ENCODE measurements at regions of chr1 and their contacts with region 1.

Region 1: GRCh38 chr1:103514920-103515503 is 10.5 kb upstream of the RNPC3 start:
- DNase-seq: peak in 7 of 9 donors; percentile 18 to 57 (median 50)
- ATAC-seq: peak; percentile 89
- H3K4me3 ChIP-seq: no peak overlapping the region
- H3K4me3 Mint-ChIP-seq: no peak overlapping the region
- H3K27ac ChIP-seq: no peak overlapping the region
- H3K27ac Mint-ChIP-seq: peak overlapping the region in 2 of 9 donors; percentile 27 to 32
- H3K4me1 ChIP-seq: no peaks in the 10 kb centered on the region
- H3K4me1 Mint-ChIP-seq: peaks cover 0 to 6% (median 4%) of the 10 kb centered on the region in 7 donors
- H3K27me3 ChIP-seq: no peaks in the 10 kb centered on the region
- H3K27me3 Mint-ChIP-seq: no peaks in the 10 kb centered on the region

Region 2: DNA sequence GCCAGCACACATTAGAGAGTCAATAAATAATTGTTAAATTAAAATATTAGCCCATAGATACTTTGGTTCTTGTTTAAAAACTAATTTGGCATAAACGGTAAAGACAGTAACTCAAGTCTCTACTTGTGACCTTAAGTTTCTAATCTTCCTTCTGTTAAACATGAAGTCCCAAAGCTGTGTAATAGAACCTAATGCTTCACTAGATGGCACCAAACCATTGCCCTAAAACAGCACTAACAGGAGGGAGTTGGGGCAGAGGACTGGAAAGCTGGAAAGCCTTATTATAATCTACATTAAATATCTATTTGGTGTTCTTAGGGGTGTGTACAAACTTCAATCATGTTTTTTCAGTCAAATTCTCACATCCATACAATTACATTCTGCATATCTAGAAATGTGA is 1694.9 kb before region 1 on chr1:
- CTCF ChIA-PET with region 1: no interaction called
- POLR2A ChIA-PET with region 1: no interaction called
- intact Hi-C with region 1: loop called in 1 of 2 experiments (anchors 10 kb)
- DNase-seq: no peak
- ATAC-seq: no peak
- H3K4me3 ChIP-seq: no peak overlapping the region
- H3K4me3 Mint-ChIP-seq: no peak overlapping the region
- H3K27ac ChIP-seq: no peak overlapping the region
- H3K27ac Mint-ChIP-seq: no peak overlapping the region
- H3K4me1 ChIP-seq: no peaks in the 10 kb centered on the region
- H3K4me1 Mint-ChIP-seq: peaks cover 0 to 3% (median 0%) of the 10 kb centered on the region in 7 donors
- H3K27me3 ChIP-seq: no peaks in the 10 kb centered on the region
- H3K27me3 Mint-ChIP-seq: peaks cover 0 to 9% (median 6%) of the 10 kb centered on the region in 5 donors

Region 3: GRCh38 chr1:103106426-103107341 is 408.3 kb before region 1 on chr1:
- CTCF ChIA-PET with region 1: no interaction called
- POLR2A ChIA-PET with region 1: no interaction called
- intact Hi-C with region 1: loop called in 1 of 2 experiments (anchors 1 kb)
- DNase-seq: no peak
- ATAC-seq: no peak
- H3K4me3 ChIP-seq: no peak overlapping the region
- H3K4me3 Mint-ChIP-seq: peak overlapping the region in 6 of 10 donors; percentile 4 to 43 (median 26)
- H3K27ac ChIP-seq: no peak overlapping the region
- H3K27ac Mint-ChIP-seq: no peak overlapping the region
- H3K4me1 ChIP-seq: no peaks in the 10 kb centered on the region
- H3K4me1 Mint-ChIP-seq: peaks cover 0 to 15% (median 7%) of the 10 kb centered on the region in 7 donors
- H3K27me3 ChIP-seq: no peaks in the 10 kb centered on the region
- H3K27me3 Mint-ChIP-seq: peaks cover 26 to 36% (median 31%) of the 10 kb centered on the region in 5 donors

Region 4: DNA sequence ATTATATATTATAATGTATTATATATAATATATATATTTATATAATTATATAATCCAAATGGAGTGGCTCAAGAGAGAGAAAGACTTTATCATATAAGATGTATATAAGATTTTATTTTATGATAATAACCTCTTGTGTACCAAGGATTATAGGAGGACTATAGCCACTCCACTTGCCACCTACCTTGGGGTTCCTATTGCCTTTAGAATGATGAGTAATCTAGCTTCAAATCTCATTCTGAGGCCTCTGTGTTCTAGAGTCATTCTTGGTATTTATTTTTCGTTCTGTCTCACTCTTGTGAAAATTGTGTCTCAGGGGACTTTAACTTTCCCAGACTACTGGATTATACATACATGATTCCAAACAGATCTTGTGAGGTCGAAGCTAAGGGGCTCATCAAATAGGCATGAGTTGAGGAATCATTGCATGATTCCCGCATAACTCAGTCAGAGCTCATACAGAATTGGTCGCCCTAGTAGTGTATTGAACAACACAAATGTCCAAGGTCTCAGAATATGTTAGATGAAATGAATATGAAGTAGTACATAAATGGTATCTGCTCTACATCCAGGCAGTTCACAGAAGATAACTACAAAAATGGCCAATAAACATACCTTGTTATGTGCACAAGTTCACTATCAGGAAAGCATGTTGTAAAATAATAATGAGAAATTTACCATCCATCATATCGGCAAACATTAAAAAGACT is 149.0 kb before region 1 on chr1:
- CTCF ChIA-PET with region 1: no interaction called
- POLR2A ChIA-PET with region 1: no interaction called
- intact Hi-C with region 1: loop called in 1 of 2 experiments (anchors 10 kb)
- DNase-seq: no peak
- ATAC-seq: no peak
- H3K4me3 ChIP-seq: no peak overlapping the region
- H3K4me3 Mint-ChIP-seq: no peak overlapping the region
- H3K27ac ChIP-seq: no peak overlapping the region
- H3K27ac Mint-ChIP-seq: no peak overlapping the region
- H3K4me1 ChIP-seq: no peaks in the 10 kb centered on the region
- H3K4me1 Mint-ChIP-seq: no peaks in the 10 kb centered on the region
- H3K27me3 ChIP-seq: no peaks in the 10 kb centered on the region
- H3K27me3 Mint-ChIP-seq: no peaks in the 10 kb centered on the region

Region 5: GRCh38 chr1:103525607-103526507 is 10.8 kb after region 1 on chr1 and contains the start of gene RNPC3:
- CTCF ChIA-PET with region 1: interaction called, 6 read pairs
- POLR2A ChIA-PET with region 1: interaction called, 5 read pairs
- intact Hi-C with region 1: loop called in 1 of 2 experiments (anchors 1 kb)
- DNase-seq: peak; percentile 83 to 92 (median 88)
- ATAC-seq: peak; percentile 91
- H3K4me3 ChIP-seq: peak within 1 kb of the TSS; percentile 78
- H3K4me3 Mint-ChIP-seq: peak within 1 kb of the TSS; percentile 87 to 99 (median 99)
- H3K27ac ChIP-seq: peak within 1 kb of the TSS; percentile 99
- H3K27ac Mint-ChIP-seq: peak within 1 kb of the TSS; percentile 97 to 100 (median 99)
- H3K4me1 ChIP-seq: peaks cover 16 to 24% of the 10 kb centered on the region in 2 donors
- H3K4me1 Mint-ChIP-seq: peaks cover 29 to 65% (median 54%) of the 10 kb centered on the region in 7 donors
- H3K27me3 ChIP-seq: no peaks in the 10 kb centered on the region
- H3K27me3 Mint-ChIP-seq: peaks cover 0 to 2% (median 0%) of the 10 kb centered on the region in 5 donors
- total RNA-seq, gene RNPC3: 35.3 to 99.4 (median 52.1) TPM

Measured in naive thymus-derived CD4-positive, alpha-beta T cell (primary cell).